B cell (primary cell): ENCODE measurements at regions of chr3 and their contacts with region 1.

Region 1: DNA sequence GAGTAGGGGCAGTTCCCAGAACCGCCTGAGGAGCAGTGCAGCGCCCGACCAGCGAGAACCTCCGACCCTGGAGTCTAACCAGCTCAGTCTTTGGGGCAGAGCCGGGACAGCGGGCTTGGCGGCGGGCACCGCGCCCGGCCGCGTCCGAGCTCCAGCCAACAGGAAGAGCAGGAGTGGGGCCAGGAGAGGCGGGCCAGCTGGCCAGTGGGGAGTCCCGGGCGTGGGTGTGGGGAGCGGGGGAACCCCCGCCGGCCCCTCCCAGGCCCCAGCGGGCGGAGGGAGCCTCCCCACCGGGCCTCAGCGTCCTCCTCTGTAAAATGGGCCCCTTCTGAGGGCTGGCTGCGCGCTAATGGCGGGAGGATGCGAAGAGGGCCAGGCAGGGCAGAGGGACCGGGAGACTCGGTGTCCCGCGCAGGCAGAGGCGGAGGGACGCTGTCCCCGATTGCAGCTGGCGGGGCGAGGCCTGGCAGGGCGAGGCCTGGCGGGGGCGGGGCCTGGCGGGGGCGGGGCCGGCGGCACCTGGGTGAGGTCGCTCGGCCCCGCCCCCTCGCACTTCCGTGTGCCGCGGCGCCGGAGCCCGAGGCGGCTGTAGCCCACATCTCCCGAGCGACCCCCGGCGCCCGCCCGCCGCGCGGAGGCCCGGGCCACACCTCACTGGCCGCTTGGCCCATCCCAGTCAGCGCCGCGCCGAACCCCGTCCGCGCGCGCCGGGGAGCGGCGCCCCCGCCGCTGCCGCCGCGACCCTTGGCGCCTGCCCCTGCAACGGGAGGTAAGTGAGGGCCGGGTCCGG is at the start of gene PRKCD:
- DNase-seq: peak; percentile 91
- ATAC-seq: peak; percentile 70
- H3K4me3 ChIP-seq: peak within 1 kb of the TSS; percentile 46 to 98 (median 86)
- H3K4me3 Mint-ChIP-seq: peak within 1 kb of the TSS; percentile 94
- H3K27ac ChIP-seq: peak within 1 kb of the TSS; percentile 80 to 82
- H3K27ac Mint-ChIP-seq: peak within 1 kb of the TSS; percentile 96
- H3K4me1 ChIP-seq: peaks cover 44 to 67% of the 10 kb centered on the region in 2 donors
- H3K4me1 Mint-ChIP-seq: peaks cover 54% of the 10 kb centered on the region
- H3K27me3 ChIP-seq: peaks cover 0 to 12% (median 5%) of the 10 kb centered on the region in 4 experiments
- H3K27me3 Mint-ChIP-seq: peaks cover 2% of the 10 kb centered on the region
- CTCF ChIP-seq: peak; percentile 70
- total RNA-seq, gene PRKCD: 42.7 and 46.7 TPM in 2 replicates

Region 2: DNA sequence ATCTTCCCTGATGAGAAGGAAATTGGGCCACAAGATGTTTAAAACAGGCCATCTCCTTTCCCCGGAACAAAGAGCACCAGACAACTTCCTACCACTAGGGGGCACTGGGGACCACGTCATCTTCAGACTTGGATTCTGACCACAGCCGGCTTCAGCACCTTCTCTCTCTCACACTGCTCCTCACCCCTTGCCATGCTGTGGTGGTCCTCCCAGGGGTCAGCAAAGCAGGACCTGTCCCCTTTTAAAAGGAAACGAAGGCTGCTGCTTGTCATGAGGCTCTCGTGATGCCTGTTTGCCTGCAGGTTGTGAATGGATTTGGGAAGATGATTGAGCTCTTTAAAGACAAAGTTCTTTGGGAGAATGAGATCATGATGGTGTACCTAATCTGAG is 46.8 kb before region 1 on chr3:
- CTCF ChIA-PET with region 1: interaction called, 11 read pairs
- POLR2A ChIA-PET with region 1: interaction called, 3 read pairs
- intact Hi-C with region 1: no loop called
- DNase-seq: peak; percentile 86
- ATAC-seq: peak; percentile 84
- H3K4me3 ChIP-seq: no peak overlapping the region
- H3K4me3 Mint-ChIP-seq: no peak overlapping the region
- H3K27ac ChIP-seq: no peak overlapping the region
- H3K27ac Mint-ChIP-seq: no peak overlapping the region
- H3K4me1 ChIP-seq: no peaks in the 10 kb centered on the region
- H3K4me1 Mint-ChIP-seq: no peaks in the 10 kb centered on the region
- H3K27me3 ChIP-seq: no peaks in the 10 kb centered on the region
- H3K27me3 Mint-ChIP-seq: no peaks in the 10 kb centered on the region
- CTCF ChIP-seq: peak; percentile 90